K562 (cell line): ENCODE measurements at regions of chr20 and their contacts with region 1.

Region 1: GRCh38 chr20:815914-816606 is 17.5 kb upstream of the FAM110A start:
- DNase-seq: peak; percentile 51 to 78 (median 60)
- ATAC-seq: peak; percentile 57
- H3K4me3 ChIP-seq: no peak overlapping the region
- H3K27ac ChIP-seq: no peak overlapping the region
- H3K4me1 ChIP-seq: peaks cover 9 to 10% of the 10 kb centered on the region in 2 experiments; a peak in 4 of 5 replicates
- H3K27me3 ChIP-seq: no peaks in the 10 kb centered on the region
- CTCF ChIP-seq: peak; percentile 82 to 91 (median 90)
- EP300 ChIP-seq: no peak
- POLR2A ChIP-seq: no peak
- RAD21 ChIP-seq: peak; percentile 90 to 93

Region 2: DNA sequence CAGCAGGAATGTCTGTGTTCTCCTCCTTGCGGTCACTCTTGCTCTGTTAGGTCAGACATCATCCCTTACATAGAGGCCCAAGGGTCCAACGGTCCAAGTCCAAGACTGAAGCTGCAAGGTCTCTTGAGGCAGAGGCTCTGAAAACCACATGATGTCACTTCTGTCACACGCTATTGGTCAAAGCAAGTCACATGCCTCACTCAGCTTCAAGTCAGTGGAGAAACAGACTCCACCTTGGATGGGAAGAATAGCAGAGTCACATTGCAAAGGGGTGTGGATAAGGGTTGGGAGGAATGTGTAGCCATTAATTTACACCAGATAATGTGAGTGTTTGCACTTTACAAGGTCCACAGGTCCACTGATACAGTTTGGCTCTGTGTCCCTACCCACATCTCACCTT is 65.3 kb before region 1 on chr20:
- CTCF ChIA-PET with region 1: no interaction called
- POLR2A ChIA-PET with region 1: no interaction called
- in situ Hi-C with region 1: no loop called
- intact Hi-C with region 1: no loop called
- DNase-seq: peak; percentile 61 to 70 (median 66)
- ATAC-seq: peak; percentile 98
- H3K4me3 ChIP-seq: no peak overlapping the region
- H3K27ac ChIP-seq: no peak overlapping the region
- H3K4me1 ChIP-seq: no peaks in the 10 kb centered on the region; a peak in 3 of 5 replicates
- H3K27me3 ChIP-seq: peaks cover 0 to 2% of the 10 kb centered on the region in 2 experiments; a peak in 1 of 5 replicates
- CTCF ChIP-seq: no peak
- EP300 ChIP-seq: no peak
- POLR2A ChIP-seq: no peak
- RAD21 ChIP-seq: no peak

Region 3: DNA sequence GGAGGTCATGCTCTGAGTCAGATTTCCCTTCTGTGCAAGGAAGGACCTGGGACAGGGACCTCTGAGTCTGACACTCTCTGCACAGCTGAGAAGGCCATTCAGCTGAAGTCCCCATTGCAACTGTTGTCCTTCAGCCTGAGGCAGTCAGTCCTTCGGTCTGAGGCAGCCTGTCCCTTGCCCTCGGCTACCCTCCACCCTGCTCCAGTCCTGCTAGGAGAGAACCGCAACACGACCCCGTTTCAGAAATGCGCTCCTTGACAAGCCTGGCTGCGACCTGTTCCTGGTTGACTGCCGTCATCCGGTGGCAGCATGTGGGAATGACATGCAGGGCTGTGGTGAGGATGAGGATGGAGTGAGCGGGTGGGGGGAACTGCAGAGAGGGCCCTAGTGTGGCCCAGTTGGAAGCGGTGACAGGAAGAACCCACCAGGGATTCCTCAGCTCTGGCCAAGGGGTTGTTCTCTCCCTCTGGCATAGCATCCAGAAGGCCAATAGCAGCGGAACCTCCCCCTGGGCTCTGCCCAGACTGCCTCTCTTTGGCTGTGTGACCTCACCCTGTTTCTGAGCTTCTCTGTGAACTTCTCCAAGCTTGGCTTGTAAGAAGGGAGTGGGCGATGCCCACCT is 140.4 kb after region 1 on chr20:
- CTCF ChIA-PET with region 1: interaction called, 9 read pairs
- POLR2A ChIA-PET with region 1: no interaction called
- in situ Hi-C with region 1: no loop called
- intact Hi-C with region 1: loop called (anchors 1 kb)
- DNase-seq: peak; percentile 21 to 42 (median 28)
- ATAC-seq: peak; percentile 71
- H3K4me3 ChIP-seq: no peak overlapping the region
- H3K27ac ChIP-seq: no peak overlapping the region
- H3K4me1 ChIP-seq: peaks cover 0 to 9% of the 10 kb centered on the region in 2 experiments; a peak in 3 of 5 replicates
- H3K27me3 ChIP-seq: peaks cover 11 to 58% of the 10 kb centered on the region in 2 experiments
- CTCF ChIP-seq: peak; percentile 61 to 70 (median 66)
- EP300 ChIP-seq: no peak
- POLR2A ChIP-seq: no peak
- RAD21 ChIP-seq: peak; percentile 54 to 69

Region 4: GRCh38 chr20:1108437-1108920 is 292.4 kb after region 1 on chr20:
- CTCF ChIA-PET with region 1: interaction called, 18 read pairs
- POLR2A ChIA-PET with region 1: interaction called, 3 read pairs
- in situ Hi-C with region 1: loop called (anchors 5 kb)
- intact Hi-C with region 1: loop called (anchors 2 kb)
- DNase-seq: peak; percentile 52 to 66 (median 56)
- ATAC-seq: peak; percentile 94
- H3K4me3 ChIP-seq: no peak overlapping the region
- H3K27ac ChIP-seq: no peak overlapping the region
- H3K4me1 ChIP-seq: no peaks in the 10 kb centered on the region; a peak in 1 of 5 replicates
- H3K27me3 ChIP-seq: no peaks in the 10 kb centered on the region
- CTCF ChIP-seq: peak; percentile 77 to 82 (median 81)
- EP300 ChIP-seq: no peak
- POLR2A ChIP-seq: no peak
- RAD21 ChIP-seq: peak; percentile 75

Region 5: DNA sequence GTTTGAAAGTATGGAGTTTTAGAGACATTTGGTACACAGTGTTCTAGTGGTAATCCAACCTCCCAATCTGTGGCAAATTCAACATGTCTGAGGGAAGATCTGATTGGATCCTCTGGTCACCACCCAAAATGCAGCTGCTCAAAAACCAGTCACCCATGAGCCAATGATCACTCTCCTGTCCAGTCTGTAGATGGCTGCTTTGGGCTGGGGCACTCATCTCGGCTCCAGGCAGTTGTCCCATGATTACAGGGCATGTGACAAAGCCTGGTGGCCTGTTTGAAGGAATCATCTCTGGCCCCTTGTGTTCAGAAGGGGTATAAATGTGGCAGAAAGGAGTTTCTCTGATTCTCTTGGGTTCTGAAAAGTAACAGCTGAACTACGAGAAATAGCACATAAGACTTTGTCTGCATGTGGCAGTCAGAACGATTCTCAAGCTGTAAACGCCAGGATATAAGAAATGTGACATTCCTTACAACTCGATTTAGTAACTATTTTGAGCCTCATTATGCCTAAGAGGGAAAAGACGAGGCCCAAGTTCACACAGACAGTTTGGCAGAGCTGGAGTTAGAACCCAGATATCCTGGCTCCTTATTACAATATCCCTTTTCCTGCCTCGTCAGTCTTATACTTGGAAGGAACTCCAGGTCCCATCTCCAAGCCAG is 383.3 kb after region 1 on chr20:
- CTCF ChIA-PET with region 1: no interaction called
- POLR2A ChIA-PET with region 1: no interaction called
- in situ Hi-C with region 1: loop called (anchors 10 kb)
- intact Hi-C with region 1: no loop called
- DNase-seq: no peak
- ATAC-seq: peak; percentile 57
- H3K4me3 ChIP-seq: no peak overlapping the region
- H3K27ac ChIP-seq: no peak overlapping the region
- H3K4me1 ChIP-seq: peaks cover 0 to 4% of the 10 kb centered on the region in 2 experiments; a peak in 1 of 5 replicates
- H3K27me3 ChIP-seq: no peaks in the 10 kb centered on the region
- CTCF ChIP-seq: peak in 2 of 3 experiments; percentile 5 to 7; a peak in 1 of 6 replicates
- EP300 ChIP-seq: no peak
- POLR2A ChIP-seq: no peak
- RAD21 ChIP-seq: no peak

Region 6: GRCh38 chr20:1503564-1504227 is 687.6 kb after region 1 on chr20:
- CTCF ChIA-PET with region 1: interaction called, 10 read pairs
- POLR2A ChIA-PET with region 1: no interaction called
- in situ Hi-C with region 1: no loop called
- intact Hi-C with region 1: no loop called
- DNase-seq: peak; percentile 72 to 82 (median 74)
- ATAC-seq: peak; percentile 100
- H3K4me3 ChIP-seq: no peak overlapping the region
- H3K27ac ChIP-seq: no peak overlapping the region
- H3K4me1 ChIP-seq: no peaks in the 10 kb centered on the region; a peak in 1 of 5 replicates
- H3K27me3 ChIP-seq: 0 out of 5 replicates have a peak, but pooled peaks cover 0 to 6% of the 10 kb centered on the region in 2 experiments
- CTCF ChIP-seq: peak; percentile 96 to 100 (median 100)
- EP300 ChIP-seq: no peak
- POLR2A ChIP-seq: no peak
- RAD21 ChIP-seq: peak; percentile 95